B cell (primary cell): ENCODE measurements at regions of chr15 and their contacts with region 1.

Region 1: DNA sequence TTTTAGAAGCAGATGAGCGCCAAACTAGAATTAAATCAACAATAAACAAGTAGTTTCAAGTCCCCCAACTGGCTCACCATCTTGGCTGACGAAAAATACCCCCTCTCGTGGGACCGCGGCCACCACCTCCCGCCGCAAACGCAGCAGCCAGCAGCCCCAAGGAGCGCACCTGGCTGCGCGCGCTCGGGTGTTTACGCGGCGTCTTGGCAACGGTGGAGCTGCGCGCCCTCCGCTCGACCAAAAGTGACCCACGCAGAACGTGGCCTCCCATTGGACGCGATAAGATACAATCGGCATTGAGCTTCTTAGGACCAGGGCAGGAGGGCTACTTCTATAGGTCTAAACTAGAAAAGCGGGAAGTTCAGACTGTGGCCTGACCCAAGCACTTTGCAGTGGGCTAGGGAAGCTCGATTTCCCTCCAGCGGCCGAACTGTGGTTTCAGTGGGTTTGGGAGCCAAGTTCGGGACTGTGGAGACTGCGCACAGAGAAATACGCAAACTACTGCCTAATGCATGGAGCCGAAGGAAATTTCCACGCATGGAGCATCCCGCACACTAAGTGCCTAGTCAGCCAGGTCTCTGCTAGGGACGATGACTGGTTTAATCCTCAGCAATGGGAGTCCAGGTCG is at the start of gene MNS1:
- DNase-seq: peak; percentile 97
- ATAC-seq: peak; percentile 96
- H3K4me3 ChIP-seq: peak within 1 kb of the TSS; percentile 37 to 71 (median 59)
- H3K4me3 Mint-ChIP-seq: peak within 1 kb of the TSS; percentile 94
- H3K27ac ChIP-seq: peak within 1 kb of the TSS; percentile 56 to 79
- H3K27ac Mint-ChIP-seq: peak within 1 kb of the TSS; percentile 96
- H3K4me1 ChIP-seq: peaks cover 4 to 12% of the 10 kb centered on the region in 2 donors
- H3K4me1 Mint-ChIP-seq: peaks cover 21% of the 10 kb centered on the region
- H3K27me3 ChIP-seq: no peaks in the 10 kb centered on the region
- H3K27me3 Mint-ChIP-seq: no peaks in the 10 kb centered on the region
- CTCF ChIP-seq: no peak
- total RNA-seq, gene MNS1: 0.83 TPM in 1 of 2 replicates, not detected in the other

Region 2: GRCh38 chr15:55494931-55495330 is 970.1 kb before region 1 on chr15:
- CTCF ChIA-PET with region 1: no interaction called
- POLR2A ChIA-PET with region 1: no interaction called
- intact Hi-C with region 1: loop called (anchors 5 kb)
- DNase-seq: peak; percentile 35
- ATAC-seq: peak; percentile 50
- H3K4me3 ChIP-seq: no peak overlapping the region
- H3K4me3 Mint-ChIP-seq: no peak overlapping the region
- H3K27ac ChIP-seq: no peak overlapping the region
- H3K27ac Mint-ChIP-seq: no peak overlapping the region
- H3K4me1 ChIP-seq: peaks cover 4 to 9% of the 10 kb centered on the region in 2 donors
- H3K4me1 Mint-ChIP-seq: peaks cover 15% of the 10 kb centered on the region
- H3K27me3 ChIP-seq: no peaks in the 10 kb centered on the region
- H3K27me3 Mint-ChIP-seq: no peaks in the 10 kb centered on the region
- CTCF ChIP-seq: no peak

Region 3: GRCh38 chr15:56371495-56372147 is 93.4 kb before region 1 on chr15:
- CTCF ChIA-PET with region 1: no interaction called
- POLR2A ChIA-PET with region 1: no interaction called
- intact Hi-C with region 1: loop called (anchors 2 kb)
- DNase-seq: peak; percentile 66
- ATAC-seq: peak; percentile 77
- H3K4me3 ChIP-seq: peak overlapping the region in 1 of 5 experiments; percentile 1
- H3K4me3 Mint-ChIP-seq: peak overlapping the region; percentile 57
- H3K27ac ChIP-seq: peak overlapping the region; percentile 76 to 85
- H3K27ac Mint-ChIP-seq: peak overlapping the region; percentile 59
- H3K4me1 ChIP-seq: peaks cover 2 to 9% of the 10 kb centered on the region in 2 donors
- H3K4me1 Mint-ChIP-seq: peaks cover 41% of the 10 kb centered on the region
- H3K27me3 ChIP-seq: peaks cover 0 to 3% (median 0%) of the 10 kb centered on the region in 4 experiments
- H3K27me3 Mint-ChIP-seq: no peaks in the 10 kb centered on the region
- CTCF ChIP-seq: no peak

Region 4: DNA sequence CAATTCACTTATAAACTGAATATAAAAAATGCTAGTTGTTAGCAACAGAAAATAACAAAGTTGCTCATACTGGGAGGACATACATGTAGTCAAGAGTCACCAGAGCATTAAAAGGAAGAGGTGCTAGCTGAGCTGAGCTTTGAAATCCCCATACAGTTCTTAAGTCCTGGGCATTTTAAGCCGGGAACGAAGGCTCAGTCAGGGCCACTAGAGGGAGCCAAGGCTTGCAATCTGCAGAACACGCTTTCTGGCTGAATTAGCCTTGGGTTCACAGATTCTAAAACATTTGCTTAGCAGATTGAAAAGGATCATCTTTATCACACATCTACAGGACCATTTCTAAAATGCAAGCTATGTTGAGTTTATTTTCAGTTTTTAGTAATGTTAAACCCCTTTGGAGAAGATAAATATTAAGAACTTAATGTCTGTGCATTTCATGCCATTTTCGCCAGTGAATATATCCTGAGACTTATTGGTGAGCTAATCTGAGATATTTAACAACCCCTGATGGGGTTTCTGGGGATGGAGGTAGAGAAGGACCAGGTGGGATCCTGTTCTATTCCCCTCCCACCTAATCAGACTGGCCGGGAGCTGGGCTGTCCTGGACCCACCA is 26.2 kb after region 1 on chr15:
- CTCF ChIA-PET with region 1: interaction called, 10 read pairs
- POLR2A ChIA-PET with region 1: no interaction called
- intact Hi-C with region 1: no loop called
- DNase-seq: peak; percentile 75
- ATAC-seq: peak; percentile 81
- H3K4me3 ChIP-seq: no peak overlapping the region
- H3K4me3 Mint-ChIP-seq: no peak overlapping the region
- H3K27ac ChIP-seq: no peak overlapping the region
- H3K27ac Mint-ChIP-seq: no peak overlapping the region
- H3K4me1 ChIP-seq: no peaks in the 10 kb centered on the region
- H3K4me1 Mint-ChIP-seq: no peaks in the 10 kb centered on the region
- H3K27me3 ChIP-seq: no peaks in the 10 kb centered on the region
- H3K27me3 Mint-ChIP-seq: no peaks in the 10 kb centered on the region
- CTCF ChIP-seq: peak; percentile 90

Region 5: DNA sequence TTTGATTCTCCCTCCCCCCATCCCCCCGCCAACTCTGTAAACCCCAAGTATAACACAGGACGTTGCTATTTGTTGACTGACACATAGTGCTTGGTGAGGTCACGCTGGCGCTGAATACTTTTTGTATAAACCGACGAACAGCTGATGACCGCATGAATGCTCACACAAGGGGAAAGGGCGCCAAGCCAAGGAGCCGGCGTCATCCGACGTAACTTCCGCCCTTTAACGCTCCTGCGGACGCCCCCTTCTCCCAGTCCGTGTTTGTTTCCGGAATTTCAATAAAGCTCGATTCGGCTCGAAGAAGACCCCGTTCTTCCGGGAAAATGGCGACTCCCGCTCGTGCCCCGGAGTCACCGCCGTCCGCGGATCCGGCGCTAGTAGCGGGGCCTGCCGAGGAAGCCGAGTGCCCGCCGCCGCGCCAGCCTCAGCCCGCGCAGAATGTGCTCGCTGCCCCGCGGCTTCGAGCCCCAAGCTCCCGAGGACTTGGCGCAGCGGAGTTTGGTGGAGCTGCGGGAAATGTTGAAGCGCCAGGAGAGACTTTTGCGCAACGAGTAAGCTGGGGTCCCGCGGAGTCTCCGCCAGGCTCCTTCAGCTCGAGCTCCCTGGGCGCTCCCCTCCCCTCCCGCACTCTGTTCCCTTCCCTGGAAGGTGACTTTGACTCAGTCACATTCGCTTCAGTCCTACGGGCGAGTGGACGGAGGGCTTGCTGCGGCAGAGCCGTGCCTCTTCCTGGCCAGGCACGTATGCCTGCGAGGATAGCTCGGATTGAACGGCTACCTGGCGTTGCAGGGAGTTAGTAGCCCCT is 1241.6 kb after region 1 on chr15 and contains the start of gene POLR2M:
- CTCF ChIA-PET with region 1: no interaction called
- POLR2A ChIA-PET with region 1: no interaction called
- intact Hi-C with region 1: loop called (anchors 2 kb)
- DNase-seq: peak; percentile 95
- ATAC-seq: peak; percentile 89
- H3K4me3 ChIP-seq: peak within 1 kb of the TSS; percentile 86 to 95 (median 88)
- H3K4me3 Mint-ChIP-seq: peak within 1 kb of the TSS; percentile 88
- H3K27ac ChIP-seq: peak within 1 kb of the TSS; percentile 86 to 95
- H3K27ac Mint-ChIP-seq: peak within 1 kb of the TSS; percentile 85
- H3K4me1 ChIP-seq: peaks cover 17 to 20% of the 10 kb centered on the region in 2 donors
- H3K4me1 Mint-ChIP-seq: peaks cover 45% of the 10 kb centered on the region
- H3K27me3 ChIP-seq: no peaks in the 10 kb centered on the region
- H3K27me3 Mint-ChIP-seq: peaks cover 14% of the 10 kb centered on the region
- CTCF ChIP-seq: no peak
- total RNA-seq, gene POLR2M: 67.4 and 73.2 TPM in 2 replicates